ENCODE measurements at regions of chr1 and their contacts with region 1.

Region 1: DNA sequence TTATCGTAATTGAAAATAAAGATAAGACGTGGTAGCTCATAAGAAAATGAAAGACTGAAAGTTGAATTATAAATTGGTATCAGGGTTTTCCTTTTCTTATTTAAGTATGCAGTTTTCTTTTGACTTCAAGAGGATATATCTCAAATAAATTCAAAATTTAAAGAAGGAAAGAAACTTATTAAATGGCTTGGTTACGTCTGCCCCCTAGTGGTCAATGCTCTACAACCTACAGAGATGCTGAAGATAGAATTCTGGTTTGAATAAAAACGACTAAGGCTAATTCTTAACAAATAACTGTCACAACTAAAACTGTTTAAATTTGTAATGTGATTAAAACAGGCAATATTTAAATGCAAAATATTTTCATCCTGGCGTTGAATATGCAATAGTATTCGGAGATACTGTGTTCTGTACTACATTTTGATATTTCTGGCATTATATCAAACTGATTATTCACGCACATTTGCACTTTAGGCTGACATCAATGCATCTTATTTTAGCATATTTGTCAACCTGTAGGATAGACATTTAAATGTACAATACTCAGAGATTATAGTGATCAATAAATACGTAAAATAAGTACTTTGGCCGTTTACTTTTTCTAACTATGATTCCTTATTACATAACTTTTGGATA is 26.8 kb downstream of the IFI44 start:
- DNase-seq: no peak
- ATAC-seq: no peak

Region 2: DNA sequence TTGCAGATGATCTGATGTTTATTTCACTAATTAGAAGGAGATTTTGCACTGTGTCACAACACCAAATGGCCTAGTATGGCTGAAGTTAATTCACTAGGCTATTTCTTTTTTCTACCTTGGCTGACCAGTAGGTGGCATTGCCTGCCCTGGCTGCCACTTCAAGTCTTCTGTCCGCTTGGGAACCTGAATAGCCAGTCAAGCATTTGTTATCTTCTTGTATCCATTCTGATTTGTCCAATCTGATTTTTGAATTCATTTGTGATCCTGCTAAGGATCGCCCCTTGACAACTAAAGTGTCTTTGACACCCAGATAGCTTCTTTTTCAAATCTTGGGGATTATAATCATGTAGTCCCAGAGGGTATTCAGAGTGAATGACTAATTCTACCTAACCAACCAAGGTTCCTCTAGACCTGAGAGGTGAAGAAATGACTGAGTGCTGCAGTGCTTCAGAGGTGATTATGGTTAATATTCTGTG is 531.3 kb before region 1 on chr1:
- intact Hi-C with region 1: loop called (anchors 10 kb)
- DNase-seq: peak; percentile 44
- ATAC-seq: peak; percentile 89

Region 3: DNA sequence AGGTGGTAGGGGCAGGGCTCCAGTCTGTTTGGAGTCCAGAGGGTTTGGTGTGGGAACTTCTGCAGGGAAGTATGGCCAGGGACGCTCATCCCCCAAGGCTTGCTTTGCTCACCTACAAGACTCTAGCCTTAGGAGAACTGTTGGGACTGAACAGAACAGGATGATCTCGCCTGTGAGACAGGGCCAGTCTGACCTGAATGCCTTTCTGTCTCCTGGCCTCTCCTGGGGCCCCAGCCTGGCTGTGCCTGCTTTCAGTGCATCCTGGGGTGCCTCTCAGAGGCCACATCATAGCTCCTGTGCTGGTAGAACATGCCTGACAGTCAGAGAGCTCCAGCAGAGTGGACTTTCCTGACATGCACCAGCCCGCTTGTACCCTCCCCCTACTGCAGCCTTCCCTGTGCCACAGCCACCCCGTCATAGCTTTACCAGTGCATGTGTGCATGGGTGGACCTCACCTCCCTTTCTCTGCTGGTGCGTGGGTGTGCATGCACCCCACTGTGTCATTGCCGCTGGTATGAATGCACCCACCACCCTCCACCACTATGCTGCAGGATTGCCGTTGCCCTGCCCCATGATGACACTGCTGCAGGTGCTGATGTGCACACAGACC is 464.9 kb before region 1 on chr1:
- intact Hi-C with region 1: no loop called
- DNase-seq: no peak
- ATAC-seq: no peak

Region 4: DNA sequence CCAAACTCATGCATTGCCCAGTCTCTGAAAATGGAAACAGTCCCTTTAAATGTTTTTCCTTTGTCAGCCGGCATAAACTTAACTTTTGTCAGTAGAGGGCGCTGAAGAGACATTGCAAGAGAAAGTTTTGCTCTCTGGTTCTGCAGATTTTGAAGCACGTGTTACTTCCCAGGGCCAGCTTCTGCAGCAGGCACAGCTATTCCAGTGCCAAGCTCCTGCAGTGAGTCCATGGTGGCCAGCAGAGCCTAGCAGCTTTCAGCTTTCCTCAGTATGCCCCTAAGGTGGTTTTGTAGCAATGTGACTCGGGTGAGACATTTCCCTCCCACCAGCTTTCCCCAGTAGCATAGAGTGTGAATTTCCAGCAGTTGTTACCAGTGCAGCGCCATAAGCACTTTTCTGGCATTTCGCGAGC is 58.8 kb before region 1 on chr1:
- intact Hi-C with region 1: loop called (anchors 5 kb)
- DNase-seq: peak; percentile 58
- ATAC-seq: peak; percentile 86